OCI-LY7 (cell line): ENCODE measurements at regions of chr3 and their contacts with region 1.

Region 1: DNA sequence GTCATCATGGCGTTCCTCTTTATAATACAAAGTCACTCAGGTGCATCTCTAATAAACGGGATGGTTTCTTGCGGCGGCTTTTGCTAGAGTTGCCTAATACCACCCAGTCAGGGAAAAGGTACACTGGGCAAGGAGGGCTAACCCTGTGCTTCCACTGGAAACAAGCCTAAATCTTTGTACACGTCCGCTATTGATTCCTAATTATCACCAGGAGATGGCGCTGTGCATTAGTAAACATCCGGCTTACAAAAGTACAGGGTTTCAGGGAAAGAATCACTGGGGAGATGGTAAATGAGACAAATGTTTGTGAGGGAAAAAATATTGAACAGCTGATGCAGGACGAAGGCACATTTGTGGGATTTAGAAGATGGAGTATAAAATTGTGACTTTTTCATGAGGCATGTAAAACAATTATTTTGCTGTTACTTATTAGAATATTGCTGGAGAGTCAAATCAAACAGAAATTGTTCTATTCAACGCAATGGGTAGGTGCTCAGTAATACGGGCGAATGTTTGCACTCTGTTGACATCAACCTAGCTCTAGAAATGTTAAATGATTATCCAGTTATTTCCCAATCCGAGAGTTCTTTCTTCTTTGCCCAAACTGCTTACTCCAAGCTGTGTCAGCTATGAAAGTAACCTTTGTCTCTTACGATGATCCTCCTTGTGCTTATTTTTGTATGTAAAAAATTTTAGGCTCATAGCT is 50.6 kb downstream of the GMNC start:
- DNase-seq: peak; percentile 69
- H3K4me3 ChIP-seq: peak overlapping the region; percentile 10
- H3K27ac ChIP-seq: no peak overlapping the region
- H3K4me1 ChIP-seq: no peaks in the 10 kb centered on the region
- CTCF ChIP-seq: peak; percentile 93

Region 2: DNA sequence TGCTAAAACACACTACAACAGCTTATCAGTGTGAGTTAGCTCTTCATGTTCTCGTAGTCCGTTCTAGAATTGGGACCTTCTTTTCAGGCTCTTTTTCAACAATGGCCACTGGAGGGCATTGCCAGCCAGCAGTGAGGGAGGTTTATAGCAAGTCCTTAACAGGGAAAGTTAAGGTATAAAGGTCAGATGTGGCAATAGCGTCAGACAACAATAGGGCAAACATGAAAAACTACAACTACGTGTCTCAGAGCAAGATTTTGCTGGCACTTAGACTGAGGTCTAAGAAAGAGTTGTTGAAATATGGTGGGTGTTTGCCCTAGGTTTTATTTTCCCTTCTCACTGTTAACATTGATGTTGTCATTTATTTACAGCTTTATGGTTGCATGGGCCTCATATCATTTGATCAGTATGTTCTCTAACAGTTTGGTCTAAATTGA is 110.8 kb before region 1 on chr3:
- CTCF ChIA-PET with region 1: no interaction called
- POLR2A ChIA-PET with region 1: no interaction called
- intact Hi-C with region 1: loop called (anchors 1 kb)
- DNase-seq: peak; percentile 40
- H3K4me3 ChIP-seq: no peak overlapping the region
- H3K27ac ChIP-seq: no peak overlapping the region
- H3K4me1 ChIP-seq: no peaks in the 10 kb centered on the region
- CTCF ChIP-seq: peak; percentile 78